Aorta (tissue), 5 donors: ENCODE measurements at regions of chr2 and their contacts with region 1.

Region 1: DNA sequence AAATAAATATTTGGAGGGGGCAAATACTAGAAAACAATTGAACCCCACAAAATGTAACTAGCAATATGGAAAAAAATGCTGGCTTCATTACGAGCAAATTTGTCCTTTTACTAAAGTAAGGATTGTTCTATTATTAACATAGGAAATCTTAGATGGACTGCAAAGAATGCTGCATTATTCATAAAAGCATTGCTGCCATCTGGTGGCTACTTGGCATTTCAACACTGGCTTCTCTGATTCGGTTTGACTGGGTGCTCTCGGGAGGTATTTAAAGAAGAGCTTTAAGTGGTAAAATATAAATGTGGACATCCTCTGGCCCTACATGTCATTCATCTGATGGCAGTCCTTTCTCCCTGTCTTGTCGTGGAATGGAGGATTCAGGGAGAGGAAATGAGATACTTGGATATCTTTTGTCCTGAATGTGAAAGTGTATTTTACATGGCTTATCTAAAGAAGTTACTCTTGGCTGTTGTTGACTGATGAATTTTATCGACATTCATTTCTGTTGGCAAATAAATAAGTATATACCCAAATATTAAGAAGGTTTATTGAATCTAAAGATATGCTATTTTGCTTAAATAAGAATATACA is 130.2 kb downstream of the ARHGAP15 start:
- DNase-seq: peak in 1 of 2 donors; percentile 62
- ATAC-seq: peak; percentile 86
- H3K4me3 ChIP-seq: peak overlapping the region in 1 of 2 donors; percentile 54
- H3K27ac ChIP-seq: no peak overlapping the region
- H3K4me1 ChIP-seq: peaks cover 0 to 2% of the 10 kb centered on the region in 2 donors
- H3K27me3 ChIP-seq: no peaks in the 10 kb centered on the region

Region 2: GRCh38 chr2:143034292-143035074 is 225.0 kb before region 1 on chr2:
- intact Hi-C with region 1: loop called (anchors 5 to 10 kb)
- DNase-seq: peak in 1 of 2 donors; percentile 52
- ATAC-seq: peak; percentile 94
- H3K4me3 ChIP-seq: no peak overlapping the region
- H3K27ac ChIP-seq: no peak overlapping the region
- H3K4me1 ChIP-seq: no peaks in the 10 kb centered on the region
- H3K27me3 ChIP-seq: no peaks in the 10 kb centered on the region

Region 3: GRCh38 chr2:143110758-143111428 is 148.6 kb before region 1 on chr2:
- intact Hi-C with region 1: loop called (anchors 2 to 5 kb)
- DNase-seq: peak; percentile 56 to 69
- ATAC-seq: peak; percentile 83
- H3K4me3 ChIP-seq: no peak overlapping the region
- H3K27ac ChIP-seq: no peak overlapping the region
- H3K4me1 ChIP-seq: no peaks in the 10 kb centered on the region
- H3K27me3 ChIP-seq: no peaks in the 10 kb centered on the region

Region 4: GRCh38 chr2:143162123-143162837 is 97.2 kb before region 1 on chr2:
- intact Hi-C with region 1: loop called (anchors 2 to 5 kb)
- DNase-seq: no peak
- ATAC-seq: peak; percentile 66
- H3K4me3 ChIP-seq: no peak overlapping the region
- H3K27ac ChIP-seq: no peak overlapping the region
- H3K4me1 ChIP-seq: peaks cover 0 to 2% of the 10 kb centered on the region in 2 donors
- H3K27me3 ChIP-seq: no peaks in the 10 kb centered on the region